Adrenal gland (tissue), 19 donors: ENCODE measurements at regions of chr14 and their contacts with region 1.

Region 1: DNA sequence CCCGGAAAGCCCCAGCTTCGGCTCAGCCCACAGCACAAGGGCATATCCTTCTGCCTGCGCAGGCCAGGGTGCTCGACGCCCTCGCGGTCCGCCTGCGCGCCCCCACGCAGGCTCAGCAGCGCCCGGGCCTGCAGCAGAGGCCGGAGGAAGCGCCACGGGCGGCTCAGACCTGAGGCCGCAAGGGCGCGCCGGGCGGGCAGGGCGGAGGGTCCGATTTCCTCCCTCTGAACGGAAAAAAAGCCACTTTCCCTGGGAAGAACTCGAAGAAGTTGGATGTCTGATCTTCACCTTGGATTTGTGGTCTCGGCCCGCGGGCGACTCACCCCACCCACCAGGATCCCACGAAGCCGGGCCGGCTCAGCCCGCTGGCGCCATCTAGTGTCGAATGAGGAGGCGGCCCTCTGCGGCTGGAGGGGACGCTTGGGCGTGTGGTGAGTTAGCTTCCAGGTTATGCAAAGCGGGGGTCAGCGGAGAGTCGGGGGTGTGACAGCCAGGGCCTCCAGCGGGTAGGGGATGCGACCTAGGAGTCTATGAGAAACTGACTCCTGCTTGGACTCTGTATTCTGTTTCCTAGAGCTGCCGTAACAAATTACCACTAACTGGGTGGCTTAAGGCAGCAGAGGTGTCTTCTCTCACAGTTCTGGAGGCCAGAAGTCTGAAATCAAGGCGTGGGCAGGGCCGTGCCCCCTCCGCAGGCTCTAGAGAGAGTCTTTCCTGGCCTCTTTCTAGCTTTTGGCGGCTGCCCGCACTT is 40.0 kb upstream of the SRSF5 start:
- DNase-seq: peak; percentile 71 to 91 (median 83)
- H3K4me3 ChIP-seq: peak overlapping the region in 2 of 4 donors; percentile 5 to 48
- H3K27ac ChIP-seq: peak overlapping the region in 3 of 5 donors; percentile 23 to 75 (median 53)
- H3K4me1 ChIP-seq: peaks cover 4 to 20% of the 10 kb centered on the region in 2 donors
- H3K27me3 ChIP-seq: no peaks in the 10 kb centered on the region
- CTCF ChIP-seq: peak; percentile 96 to 100 (median 98)
- POLR2A ChIP-seq: no peak

Region 2: GRCh38 chr14:69586404-69586803 is 140.5 kb before region 1 on chr14:
- intact Hi-C with region 1: loop called (anchors 5 kb)
- DNase-seq: no peak
- H3K4me3 ChIP-seq: no peak overlapping the region
- H3K27ac ChIP-seq: no peak overlapping the region
- H3K4me1 ChIP-seq: peaks cover 0 to 5% of the 10 kb centered on the region in 2 donors
- H3K27me3 ChIP-seq: no peaks in the 10 kb centered on the region
- CTCF ChIP-seq: no peak
- POLR2A ChIP-seq: no peak

Region 3: GRCh38 chr14:69600304-69600891 is 126.5 kb before region 1 on chr14:
- intact Hi-C with region 1: loop called (anchors 5 kb)
- DNase-seq: no peak
- H3K4me3 ChIP-seq: no peak overlapping the region
- H3K27ac ChIP-seq: no peak overlapping the region
- H3K4me1 ChIP-seq: no peaks in the 10 kb centered on the region
- H3K27me3 ChIP-seq: no peaks in the 10 kb centered on the region
- CTCF ChIP-seq: no peak
- POLR2A ChIP-seq: no peak